Activated CD4-positive, alpha-beta T cell treated with anti-CD3 and anti-CD28 coated beads for 36 hours (primary cell): ENCODE measurements at regions of chr12 and their contacts with region 1.

Region 1: DNA sequence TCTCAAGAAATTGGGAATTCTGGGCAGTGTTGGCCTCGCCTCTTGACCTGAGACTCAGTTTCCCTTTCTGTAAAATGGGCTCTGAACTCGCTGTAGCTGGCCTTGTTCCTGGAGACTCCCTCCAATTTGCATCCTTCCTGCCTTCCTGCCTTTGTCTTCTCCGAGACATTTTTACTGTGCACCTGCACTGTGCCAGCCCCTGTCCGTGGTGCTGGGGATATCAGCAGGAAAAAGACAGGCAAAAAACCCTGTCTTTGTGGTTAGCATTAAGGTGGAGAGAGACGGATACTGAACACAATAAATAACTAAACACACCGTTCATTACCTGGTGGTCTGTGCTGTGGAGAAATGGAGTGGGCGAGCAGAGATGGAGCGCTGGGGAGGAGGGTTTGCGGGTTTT is 129.8 kb downstream of the AACS start:
- DNase-seq: no peak
- ATAC-seq: no peak
- H3K4me3 Mint-ChIP-seq: no peak overlapping the region
- H3K27ac Mint-ChIP-seq: no peak overlapping the region
- H3K4me1 Mint-ChIP-seq: no peaks in the 10 kb centered on the region
- H3K27me3 Mint-ChIP-seq: peaks cover 44% of the 10 kb centered on the region

Region 2: GRCh38 chr12:124829008-124829707 is 365.8 kb before region 1 on chr12:
- CTCF ChIA-PET with region 1: no interaction called
- POLR2A ChIA-PET with region 1: no interaction called
- intact Hi-C with region 1: loop called in 1 of 2 experiments (anchors 5 kb)
- DNase-seq: no peak
- ATAC-seq: no peak
- H3K4me3 Mint-ChIP-seq: no peak overlapping the region
- H3K27ac Mint-ChIP-seq: peak overlapping the region; percentile 20
- H3K4me1 Mint-ChIP-seq: peaks cover 14% of the 10 kb centered on the region
- H3K27me3 Mint-ChIP-seq: no peaks in the 10 kb centered on the region